Mucosa of descending colon (tissue), 3 donors: ENCODE measurements at regions of chr7 and their contacts with region 1.

Region 1: GRCh38 chr7:55415173-55415778 is 50.1 kb downstream of the LANCL2 start:
- DNase-seq: peak in 2 of 3 donors; percentile 76 to 95
- ATAC-seq: peak; percentile 95
- H3K4me3 ChIP-seq: no peak overlapping the region
- H3K4me1 ChIP-seq: no peaks in the 10 kb centered on the region
- CTCF ChIP-seq: peak; percentile 48

Region 2: DNA sequence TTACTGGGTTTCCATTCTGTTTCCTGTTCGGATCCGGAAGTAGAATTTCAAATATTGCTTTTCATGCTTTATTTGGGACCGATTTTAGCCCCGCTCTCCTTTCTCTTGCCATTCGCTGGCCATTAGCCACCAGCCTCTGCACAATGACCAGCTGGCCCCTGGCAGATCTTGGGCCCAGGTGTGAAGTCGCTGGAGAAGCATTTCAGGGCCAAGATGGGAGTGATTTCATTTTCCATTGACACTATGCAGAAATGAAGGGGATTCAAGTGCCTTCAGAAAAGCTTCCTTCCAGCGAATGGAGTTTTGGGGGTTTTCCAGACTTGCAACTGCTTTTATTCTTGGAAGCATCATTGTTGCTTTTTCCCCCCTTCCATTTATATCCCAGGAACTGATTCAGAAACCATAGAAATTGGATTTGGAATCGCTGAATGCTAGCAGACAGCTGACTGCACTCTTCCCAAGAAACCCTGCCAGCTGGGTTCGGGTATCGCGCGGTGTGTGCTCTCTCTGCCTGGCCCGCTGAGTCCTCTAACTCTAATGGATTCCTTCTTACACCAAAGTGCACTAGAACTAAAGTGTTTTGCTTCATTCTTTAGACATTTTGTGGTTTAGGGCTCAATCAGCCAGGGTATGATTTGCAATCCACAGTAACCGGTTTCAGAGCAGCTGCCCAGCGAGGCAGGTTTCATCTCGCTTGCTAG is 304.5 kb before region 1 on chr7:
- intact Hi-C with region 1: no loop called
- DNase-seq: no peak
- ATAC-seq: no peak
- H3K4me3 ChIP-seq: no peak overlapping the region
- H3K4me1 ChIP-seq: peaks cover 5% of the 10 kb centered on the region
- CTCF ChIP-seq: no peak

Region 3: DNA sequence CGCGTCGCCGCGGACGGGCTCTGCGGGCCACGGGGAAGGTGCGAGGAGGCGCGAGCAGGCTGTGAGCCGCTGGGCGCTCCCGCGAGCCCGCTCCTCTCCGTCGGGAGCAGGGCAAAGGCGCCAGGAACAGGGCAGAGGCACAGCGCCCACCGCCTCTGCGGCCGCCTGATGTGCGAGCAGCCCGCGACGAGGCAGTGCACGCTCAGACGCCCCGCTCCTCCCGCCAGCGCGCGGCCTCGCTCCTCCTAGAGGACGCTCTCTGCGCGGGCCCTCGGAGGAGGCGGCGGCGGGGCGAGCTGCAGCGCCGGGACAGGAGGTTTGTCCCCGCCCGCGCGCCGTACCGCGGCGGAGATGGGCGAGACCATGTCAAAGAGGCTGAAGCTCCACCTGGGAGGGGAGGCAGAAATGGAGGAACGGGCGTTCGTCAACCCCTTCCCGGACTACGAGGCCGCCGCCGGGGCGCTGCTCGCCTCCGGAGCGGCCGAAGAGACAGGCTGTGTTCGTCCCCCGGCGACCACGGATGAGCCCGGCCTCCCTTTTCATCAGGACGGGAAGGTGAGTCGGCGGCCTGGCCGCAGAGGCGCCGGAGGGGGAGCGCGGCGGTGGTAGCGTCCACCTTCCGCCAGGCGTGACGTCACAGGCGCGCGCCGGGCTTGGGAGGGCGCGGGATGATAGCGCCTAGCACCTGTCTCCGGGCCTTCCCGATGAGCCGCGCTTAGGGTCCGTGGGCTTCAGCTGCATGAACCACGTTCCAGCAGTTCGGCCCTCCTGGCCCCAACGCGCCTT is 49.4 kb before region 1 on chr7:
- intact Hi-C with region 1: loop called in 1 of 2 experiments (anchors 10 kb)
- DNase-seq: peak; percentile 94 to 97 (median 96)
- ATAC-seq: peak; percentile 98
- H3K4me3 ChIP-seq: peak overlapping the region; percentile 71
- H3K4me1 ChIP-seq: peaks cover 16% of the 10 kb centered on the region
- CTCF ChIP-seq: peak; percentile 15